HEK293 (cell line): ENCODE measurements at regions of chr16 and their contacts with region 1.

Region 1: GRCh38 chr16:84511180-84511824 is 6.8 kb upstream of the MEAK7 start:
- H3K4me3 ChIP-seq: no peak overlapping the region
- H3K27ac ChIP-seq: no peak overlapping the region
- H3K4me1 ChIP-seq: no peaks in the 10 kb centered on the region; the same call in 1 of the 2 replicates
- CTCF ChIP-seq: peak; percentile 71

Region 2: GRCh38 chr16:84526794-84527503 is 15.6 kb after region 1 on chr16:
- CTCF ChIA-PET with region 1: interaction called, 29 read pairs
- POLR2A ChIA-PET with region 1: no interaction called
- H3K4me3 ChIP-seq: no peak overlapping the region
- H3K27ac ChIP-seq: no peak overlapping the region
- H3K4me1 ChIP-seq: no peaks in the 10 kb centered on the region
- CTCF ChIP-seq: no peak